ENCODE measurements at regions of chr3 and their contacts with region 1.

Region 1: GRCh38 chr3:175410251-175410650 is 551.1 kb downstream of the NAALADL2 start:
- DNase-seq: peak; percentile 89
- ATAC-seq: peak; percentile 79
- H3K4me3 ChIP-seq: no peak overlapping the region
- H3K27ac ChIP-seq: peak overlapping the region; percentile 68; the same call in 1 of the 2 replicates
- H3K4me1 ChIP-seq: peaks cover 11% of the 10 kb centered on the region
- H3K27me3 ChIP-seq: no peaks in the 10 kb centered on the region
- CTCF ChIP-seq: no peak
- POLR2A ChIP-seq: no peak
- RAD21 ChIP-seq: no peak

Region 2: DNA sequence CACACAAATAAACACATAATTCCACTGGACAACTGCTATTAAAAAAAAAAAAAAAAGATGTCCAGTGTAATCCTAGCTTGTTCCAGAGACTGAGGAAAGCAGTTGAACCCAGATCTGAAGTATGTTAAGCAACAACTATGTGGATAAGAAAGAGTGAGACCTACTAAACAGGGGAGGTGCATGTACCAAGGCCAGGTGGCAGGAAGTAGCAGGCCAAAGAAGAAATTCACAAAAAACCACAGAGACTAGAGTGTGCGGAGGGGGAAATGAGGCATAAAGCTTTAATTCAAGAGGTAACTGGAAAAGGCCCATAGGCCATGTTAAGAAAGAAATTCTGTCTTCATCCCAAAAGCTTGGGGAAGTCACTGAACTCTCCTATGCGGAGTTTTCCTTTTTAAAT is 61.1 kb before region 1 on chr3:
- CTCF ChIA-PET with region 1: no interaction called
- POLR2A ChIA-PET with region 1: no interaction called
- dilution Hi-C with region 1: no loop called
- in situ Hi-C with region 1: no loop called
- intact Hi-C with region 1: no loop called
- DNase-seq: no peak
- ATAC-seq: no peak
- H3K4me3 ChIP-seq: no peak overlapping the region
- H3K27ac ChIP-seq: no peak overlapping the region
- H3K4me1 ChIP-seq: no peaks in the 10 kb centered on the region
- H3K27me3 ChIP-seq: no peaks in the 10 kb centered on the region
- CTCF ChIP-seq: no peak
- POLR2A ChIP-seq: no peak
- RAD21 ChIP-seq: no peak

Region 3: DNA sequence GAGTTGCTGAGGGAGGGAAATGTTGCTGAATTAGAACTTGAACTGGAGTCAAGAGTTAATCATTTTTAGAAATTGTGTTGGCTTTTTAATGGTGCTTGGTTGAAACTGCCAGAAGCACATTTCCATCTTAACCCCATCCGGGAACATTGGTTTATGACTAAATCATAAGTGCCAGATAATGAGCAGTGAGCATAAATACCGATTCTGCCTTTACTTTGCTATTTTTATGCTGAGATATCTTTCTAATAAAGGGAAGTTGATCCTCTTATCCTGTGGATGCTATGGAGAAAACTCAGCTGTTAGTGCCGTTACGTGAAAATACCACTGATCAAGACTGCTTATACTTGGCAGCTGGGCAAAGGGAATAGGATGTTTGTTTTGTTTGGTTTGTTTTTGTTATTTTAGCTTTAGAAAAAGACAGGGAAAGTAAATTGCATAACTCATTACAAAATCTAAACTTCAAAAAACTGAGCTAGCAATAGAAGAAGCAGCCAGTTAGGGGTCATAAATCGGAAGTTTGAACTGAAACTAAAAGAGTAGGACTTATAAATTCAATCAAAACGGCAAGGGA is 262.0 kb after region 1 on chr3:
- CTCF ChIA-PET with region 1: no interaction called
- POLR2A ChIA-PET with region 1: no interaction called
- dilution Hi-C with region 1: no loop called
- in situ Hi-C with region 1: no loop called
- intact Hi-C with region 1: loop called (anchors 5 kb)
- DNase-seq: peak; percentile 63
- ATAC-seq: peak; percentile 83
- H3K4me3 ChIP-seq: peak overlapping the region; percentile 37; the same call in 1 of the 2 replicates
- H3K27ac ChIP-seq: peak overlapping the region; percentile 29; the same call in 1 of the 2 replicates
- H3K4me1 ChIP-seq: peaks cover 2% of the 10 kb centered on the region; the same call in 1 of the 2 replicates
- H3K27me3 ChIP-seq: no peaks in the 10 kb centered on the region
- CTCF ChIP-seq: no peak
- POLR2A ChIP-seq: no peak
- RAD21 ChIP-seq: no peak